ENCODE measurements at regions of chr1 and their contacts with region 1.

Region 1: GRCh38 chr1:225554216-225554812 is 98.6 kb downstream of the ENAH start:
- DNase-seq: no peak
- H3K4me3 ChIP-seq: no peak overlapping the region
- H3K27ac ChIP-seq: no peak overlapping the region
- H3K27me3 ChIP-seq: no peaks in the 10 kb centered on the region
- CTCF ChIP-seq: peak; percentile 62

Region 2: DNA sequence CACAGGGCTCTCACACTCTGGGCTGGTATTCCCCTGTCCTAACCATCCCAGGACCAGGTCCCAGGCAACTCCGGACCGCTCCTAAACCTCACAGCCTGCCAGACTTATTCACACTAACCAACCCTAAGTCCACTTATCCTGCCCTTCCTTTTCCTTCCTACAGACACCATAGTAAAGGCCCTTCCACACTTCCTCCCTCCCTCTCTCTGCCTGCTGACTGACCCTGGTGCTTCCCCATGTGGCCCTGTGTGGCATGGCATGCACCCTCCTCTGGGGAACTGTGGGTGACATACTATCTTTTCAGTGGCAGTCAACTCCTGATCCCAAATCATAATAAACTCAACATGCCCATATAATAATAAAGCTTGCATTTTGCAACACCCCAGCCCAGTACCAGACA is 779.9 kb before region 1 on chr1:
- CTCF ChIA-PET with region 1: no interaction called
- POLR2A ChIA-PET with region 1: no interaction called
- DNase-seq: no peak
- H3K4me3 ChIP-seq: no peak overlapping the region
- H3K27ac ChIP-seq: no peak overlapping the region
- H3K27me3 ChIP-seq: no peaks in the 10 kb centered on the region
- CTCF ChIP-seq: peak; percentile 13; the same call in 1 of the 2 replicates

Region 3: DNA sequence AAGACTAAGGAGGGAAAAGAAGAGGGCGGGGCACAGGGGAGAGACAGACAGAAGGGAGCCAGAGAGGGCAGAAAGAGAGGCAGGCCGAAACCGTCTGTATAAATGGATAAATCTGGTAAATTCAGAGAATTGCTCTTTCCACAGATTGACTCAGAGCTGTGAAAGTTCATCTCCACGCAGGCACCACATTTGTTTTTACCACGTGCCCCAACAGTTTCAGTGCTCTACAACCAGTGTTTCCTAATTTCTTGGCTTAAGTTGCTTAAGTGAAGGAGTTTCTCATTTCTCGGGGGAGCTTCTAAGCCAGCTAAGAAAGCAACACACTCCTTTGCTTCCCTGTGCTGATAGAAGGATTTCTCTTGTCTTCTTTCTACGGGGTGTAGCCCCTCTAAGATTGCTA is 11.5 kb after region 1 on chr1:
- CTCF ChIA-PET with region 1: interaction called, 14 read pairs
- POLR2A ChIA-PET with region 1: no interaction called
- DNase-seq: no peak
- H3K4me3 ChIP-seq: no peak overlapping the region
- H3K27ac ChIP-seq: no peak overlapping the region
- H3K27me3 ChIP-seq: no peaks in the 10 kb centered on the region
- CTCF ChIP-seq: no peak

Measured in AG04450 (cell line).